Activated CD4-positive, alpha-beta memory T cell treated with anti-CD3 and anti-CD28 coated beads for 36 hours (primary cell): ENCODE measurements at regions of chr13 and their contacts with region 1.

Region 1: DNA sequence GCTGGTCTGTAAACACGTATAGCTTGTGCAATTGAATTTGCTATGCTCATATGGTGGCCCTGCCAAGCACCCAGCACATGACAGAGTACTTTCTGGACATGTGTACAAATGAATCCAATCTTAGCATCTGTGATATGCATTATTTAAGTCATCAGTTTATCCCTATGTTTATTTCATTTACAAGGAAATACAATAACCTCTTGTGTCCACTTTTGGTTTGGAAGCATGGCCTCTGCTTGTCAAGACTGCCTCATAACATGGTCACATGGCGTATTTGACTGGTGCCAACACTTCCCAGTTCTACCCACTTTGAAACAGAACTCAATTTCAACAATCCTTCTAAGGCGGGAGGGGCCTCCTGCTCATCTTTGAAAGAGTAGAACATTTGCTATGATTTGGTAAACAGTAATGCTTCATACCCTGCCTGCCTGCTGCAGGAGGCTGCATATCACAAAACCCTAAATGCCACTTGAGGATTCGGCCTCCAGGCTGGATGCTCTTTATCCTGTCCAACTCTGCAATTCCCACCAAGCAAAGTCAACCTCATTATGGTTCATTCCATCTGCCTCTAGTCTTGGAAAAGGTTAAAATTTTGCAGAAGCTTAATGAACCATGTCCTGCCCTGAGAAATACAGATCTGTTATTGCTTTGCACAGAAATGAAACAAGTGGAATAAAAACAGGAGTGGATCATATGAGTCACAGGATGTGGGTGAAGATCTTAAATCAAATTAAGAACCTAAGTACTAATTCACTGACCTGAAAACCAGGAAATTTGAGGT is 151.3 kb downstream of the CYSLTR2 start:
- DNase-seq: peak; percentile 15
- H3K4me3 Mint-ChIP-seq: no peak overlapping the region
- H3K27ac Mint-ChIP-seq: peak overlapping the region; percentile 26
- H3K4me1 Mint-ChIP-seq: peaks cover 30% of the 10 kb centered on the region
- H3K27me3 Mint-ChIP-seq: no peaks in the 10 kb centered on the region

Region 2: GRCh38 chr13:48892053-48892690 is 87.2 kb after region 1 on chr13:
- CTCF ChIA-PET with region 1: no interaction called
- POLR2A ChIA-PET with region 1: interaction called, 4 read pairs
- intact Hi-C with region 1: loop called (anchors 1 kb)
- DNase-seq: no peak
- H3K4me3 Mint-ChIP-seq: no peak overlapping the region
- H3K27ac Mint-ChIP-seq: peak overlapping the region; percentile 49
- H3K4me1 Mint-ChIP-seq: peaks cover 36% of the 10 kb centered on the region
- H3K27me3 Mint-ChIP-seq: peaks cover 3% of the 10 kb centered on the region

Region 3: DNA sequence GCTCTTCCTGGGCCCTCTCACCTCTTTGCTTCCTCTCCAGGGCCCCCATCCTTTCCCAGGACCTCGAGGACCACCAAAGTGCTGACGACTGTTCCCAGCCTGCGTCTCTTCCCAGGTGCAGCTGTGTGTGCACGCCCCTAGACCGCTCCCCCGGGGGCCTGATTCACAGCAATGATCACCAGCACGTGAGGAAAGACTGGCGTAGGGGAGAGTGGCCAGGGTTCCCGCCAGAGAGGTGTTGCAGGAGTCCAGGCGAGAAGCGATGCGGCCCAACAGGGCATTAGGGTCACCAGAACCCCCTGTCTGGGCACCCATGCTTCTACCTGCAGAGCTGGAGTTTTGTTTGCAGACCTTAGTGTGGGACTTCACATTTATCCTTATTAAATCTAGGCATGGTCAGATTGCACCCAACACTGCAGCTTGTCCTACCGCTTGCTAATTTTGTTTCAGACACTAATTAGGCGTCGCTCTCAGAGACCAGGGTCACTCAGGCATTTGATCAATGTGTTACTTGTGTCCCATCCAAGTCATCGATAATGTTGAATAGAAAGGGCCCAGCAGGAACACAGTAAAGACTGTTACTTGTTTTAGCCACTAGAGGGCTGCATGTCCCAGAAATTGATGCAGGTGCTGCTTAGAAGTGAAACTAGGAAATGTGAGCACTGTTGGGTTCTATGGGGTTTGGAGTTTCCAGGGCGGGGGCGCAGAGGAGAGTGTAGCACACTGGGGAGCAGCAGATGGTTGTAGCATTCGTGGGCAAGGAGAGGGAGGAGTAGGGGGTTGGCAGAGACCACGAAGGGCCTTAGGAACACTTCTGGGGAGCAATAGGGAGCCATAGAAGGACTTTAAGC is 496.0 kb after region 1 on chr13:
- CTCF ChIA-PET with region 1: no interaction called
- POLR2A ChIA-PET with region 1: no interaction called
- intact Hi-C with region 1: no loop called
- DNase-seq: peak; percentile 75
- H3K4me3 Mint-ChIP-seq: peak overlapping the region; percentile 33
- H3K27ac Mint-ChIP-seq: no peak overlapping the region
- H3K4me1 Mint-ChIP-seq: peaks cover 9% of the 10 kb centered on the region
- H3K27me3 Mint-ChIP-seq: no peaks in the 10 kb centered on the region